GM12878 (cell line): ENCODE measurements at regions of chr17 and their contacts with region 1.

Region 1: DNA sequence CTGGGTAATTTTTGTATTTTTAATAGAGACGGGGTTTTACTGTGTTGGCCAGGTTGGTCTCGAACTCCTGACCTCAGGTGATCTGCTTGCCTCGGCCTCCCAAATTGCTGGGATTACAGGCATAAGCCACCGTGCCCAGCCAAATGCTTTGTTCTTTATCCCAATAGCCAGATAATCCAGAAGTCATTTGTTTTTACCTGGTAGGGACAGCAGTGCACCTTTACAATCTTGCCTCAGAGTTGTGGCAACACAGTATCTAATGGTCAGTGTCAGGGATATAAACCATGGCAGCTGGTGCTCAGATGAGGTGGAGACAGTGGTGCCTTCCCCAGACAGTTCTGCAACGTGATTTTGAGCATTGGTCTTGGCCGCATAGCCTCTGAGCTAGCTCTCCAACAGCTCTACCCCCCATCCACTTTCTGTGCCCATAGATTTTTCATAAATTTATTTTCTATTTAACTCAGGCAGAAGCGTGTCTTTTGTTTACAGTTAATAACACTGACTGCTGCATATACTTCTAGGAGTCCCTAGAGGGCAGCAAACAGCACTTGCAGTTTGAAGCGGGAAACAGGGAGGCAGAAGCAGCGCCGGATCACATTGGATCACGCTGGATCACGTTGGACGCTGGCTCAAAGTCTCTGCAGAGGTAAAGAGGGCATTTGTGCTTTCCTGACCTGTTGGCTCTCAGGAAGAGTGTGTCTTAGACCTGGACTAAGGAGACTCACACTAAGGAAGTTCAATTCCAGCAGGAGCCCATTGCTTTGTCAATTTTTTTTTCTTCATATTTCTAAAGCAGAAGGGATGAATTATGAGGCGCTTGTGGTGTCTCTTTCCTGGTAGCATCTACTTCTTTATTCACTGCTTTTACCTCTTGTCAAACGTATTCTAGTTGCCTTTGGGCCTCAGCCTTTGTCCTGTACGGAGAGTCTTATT is 5.1 kb upstream of the GGT6 start:
- DNase-seq: no peak
- ATAC-seq: peak; percentile 78
- H3K4me3 ChIP-seq: no peak overlapping the region
- H3K27ac ChIP-seq: no peak overlapping the region
- H3K4me1 ChIP-seq: peaks cover 32% of the 10 kb centered on the region
- H3K27me3 ChIP-seq: no peaks in the 10 kb centered on the region
- CTCF ChIP-seq: peak; percentile 80 to 92 (median 86)
- EP300 ChIP-seq: no peak
- POLR2A ChIP-seq: no peak
- RAD21 ChIP-seq: peak; percentile 53

Region 2: DNA sequence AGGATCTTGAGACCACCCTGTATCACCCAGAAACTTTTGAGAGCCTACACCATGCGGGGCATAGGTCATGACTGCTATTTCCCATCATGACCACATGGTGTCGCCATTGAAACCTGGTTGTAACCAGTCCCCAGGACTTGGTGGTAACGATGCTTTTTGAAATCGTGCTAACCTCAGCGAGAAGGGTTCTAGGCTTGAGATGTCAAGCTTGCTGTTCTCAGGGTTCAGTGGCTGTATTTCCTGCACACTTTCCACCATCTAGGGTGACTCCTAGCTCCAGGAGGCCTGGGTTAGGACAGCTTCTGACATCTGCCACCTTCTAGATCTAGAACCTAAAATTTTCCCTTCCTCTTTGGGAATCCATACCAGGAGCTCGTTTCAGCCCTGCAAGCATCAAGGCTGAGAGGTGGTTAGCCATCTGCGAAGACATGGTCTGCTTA is 144.8 kb before region 1 on chr17:
- CTCF ChIA-PET with region 1: interaction called, 33 read pairs
- POLR2A ChIA-PET with region 1: no interaction called
- RAD21 ChIA-PET with region 1: interaction called, 9 read pairs
- SMC1A ChIA-PET with region 1: interaction called, 9 read pairs
- in situ Hi-C with region 1: no loop called
- intact Hi-C with region 1: loop called (anchors 10 kb)
- DNase-seq: peak; percentile 37
- ATAC-seq: peak; percentile 98
- H3K4me3 ChIP-seq: no peak overlapping the region
- H3K27ac ChIP-seq: no peak overlapping the region
- H3K4me1 ChIP-seq: no peaks in the 10 kb centered on the region
- H3K27me3 ChIP-seq: no peaks in the 10 kb centered on the region
- CTCF ChIP-seq: peak; percentile 89 to 93 (median 91)
- EP300 ChIP-seq: no peak
- POLR2A ChIP-seq: no peak
- RAD21 ChIP-seq: peak; percentile 91

Region 3: DNA sequence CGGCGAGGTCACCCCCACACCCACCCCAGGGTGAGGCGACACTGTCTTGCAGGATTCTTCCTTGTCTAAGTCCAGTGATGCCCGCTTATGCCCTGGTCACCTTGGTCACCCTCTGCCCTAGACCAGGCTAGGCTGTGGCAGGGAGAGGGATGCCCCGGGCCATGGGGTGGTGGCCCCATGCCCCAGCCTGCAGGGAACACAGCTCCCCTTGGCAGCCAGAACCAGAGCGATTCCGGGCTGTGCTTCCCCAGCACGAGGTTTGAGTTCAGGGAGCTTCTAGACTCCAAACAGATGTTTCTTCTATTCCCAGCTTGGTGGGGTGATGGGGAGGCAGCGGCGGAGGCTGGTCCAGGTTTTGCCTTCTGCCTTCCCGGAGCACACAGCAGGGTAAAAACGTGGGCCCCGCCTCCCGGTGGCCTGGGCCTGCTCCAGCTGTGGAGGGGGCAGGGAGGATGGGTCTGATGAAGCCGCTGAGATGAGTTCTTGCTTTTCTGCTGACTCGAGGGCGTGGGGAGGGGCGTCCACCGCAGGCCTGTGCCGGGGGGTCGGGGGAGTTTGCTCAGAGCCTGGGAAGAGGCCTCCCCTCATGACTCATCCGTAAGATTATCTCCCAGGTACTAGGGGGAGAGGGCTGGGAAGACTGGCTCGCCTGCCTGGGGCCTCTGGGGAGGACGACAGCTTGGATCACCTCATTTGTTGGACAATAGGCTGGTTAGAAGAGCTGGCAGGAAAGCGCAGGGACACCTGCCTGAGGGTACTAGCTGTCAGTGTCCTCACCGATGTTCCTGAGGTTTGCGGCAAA is 34.2 kb after region 1 on chr17:
- CTCF ChIA-PET with region 1: interaction called, 10 read pairs
- POLR2A ChIA-PET with region 1: no interaction called
- RAD21 ChIA-PET with region 1: no interaction called
- SMC1A ChIA-PET with region 1: interaction called, 3 read pairs
- in situ Hi-C with region 1: no loop called
- intact Hi-C with region 1: no loop called
- DNase-seq: no peak
- ATAC-seq: no peak
- H3K4me3 ChIP-seq: no peak overlapping the region
- H3K27ac ChIP-seq: no peak overlapping the region
- H3K4me1 ChIP-seq: no peaks in the 10 kb centered on the region
- H3K27me3 ChIP-seq: no peaks in the 10 kb centered on the region; a peak in 3 of 4 replicates
- CTCF ChIP-seq: no peak
- EP300 ChIP-seq: no peak
- POLR2A ChIP-seq: no peak
- RAD21 ChIP-seq: no peak

Region 4: GRCh38 chr17:4625181-4625617 is 59.7 kb after region 1 on chr17:
- CTCF ChIA-PET with region 1: interaction called, 135 read pairs
- POLR2A ChIA-PET with region 1: no interaction called
- RAD21 ChIA-PET with region 1: interaction called, 24 read pairs
- SMC1A ChIA-PET with region 1: interaction called, 31 read pairs
- in situ Hi-C with region 1: loop called (anchors 5 kb)
- intact Hi-C with region 1: loop called (anchors 1 kb)
- DNase-seq: no peak
- ATAC-seq: no peak
- H3K4me3 ChIP-seq: no peak overlapping the region
- H3K27ac ChIP-seq: no peak overlapping the region
- H3K4me1 ChIP-seq: no peaks in the 10 kb centered on the region
- H3K27me3 ChIP-seq: peaks cover 0 to 3% of the 10 kb centered on the region in 2 experiments; a peak in 2 of 4 replicates
- CTCF ChIP-seq: no peak
- EP300 ChIP-seq: no peak
- POLR2A ChIP-seq: no peak
- RAD21 ChIP-seq: no peak

Region 5: DNA sequence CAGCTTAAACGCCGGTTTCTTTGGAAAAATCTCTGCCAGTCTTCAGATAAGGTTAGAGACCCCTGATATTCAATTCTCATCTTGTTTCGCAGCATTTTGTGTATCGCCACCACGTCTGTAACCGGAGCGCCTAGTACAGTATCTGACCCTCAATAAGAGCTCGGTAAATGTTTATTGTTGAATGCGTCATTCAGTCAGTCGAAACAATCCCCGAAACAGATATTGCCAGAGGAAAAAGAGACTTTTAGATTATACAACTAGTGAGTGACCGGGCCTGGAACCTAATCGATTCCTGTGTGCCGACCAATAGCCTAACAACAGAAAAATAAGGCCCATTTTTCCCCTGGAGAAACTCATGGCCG is 137.8 kb after region 1 on chr17:
- CTCF ChIA-PET with region 1: interaction called, 13 read pairs
- POLR2A ChIA-PET with region 1: no interaction called
- RAD21 ChIA-PET with region 1: interaction called, 3 read pairs
- SMC1A ChIA-PET with region 1: interaction called, 8 read pairs
- in situ Hi-C with region 1: no loop called
- intact Hi-C with region 1: no loop called
- DNase-seq: no peak
- ATAC-seq: no peak
- H3K4me3 ChIP-seq: peak overlapping the region; percentile 82
- H3K27ac ChIP-seq: peak overlapping the region; percentile 71
- H3K4me1 ChIP-seq: peaks cover 5% of the 10 kb centered on the region
- H3K27me3 ChIP-seq: no peaks in the 10 kb centered on the region
- CTCF ChIP-seq: no peak
- EP300 ChIP-seq: no peak
- POLR2A ChIP-seq: no peak
- RAD21 ChIP-seq: no peak

Region 6: GRCh38 chr17:4903051-4903818 is 337.8 kb after region 1 on chr17 and contains the start of gene CHRNE:
- CTCF ChIA-PET with region 1: interaction called, 11 read pairs
- POLR2A ChIA-PET with region 1: no interaction called
- RAD21 ChIA-PET with region 1: no interaction called
- SMC1A ChIA-PET with region 1: interaction called, 3 read pairs
- in situ Hi-C with region 1: no loop called
- intact Hi-C with region 1: no loop called
- DNase-seq: peak; percentile 37
- ATAC-seq: peak; percentile 80
- H3K4me3 ChIP-seq: no peak within 1 kb of the TSS
- H3K27ac ChIP-seq: no peak within 1 kb of the TSS
- H3K4me1 ChIP-seq: peaks cover 20% of the 10 kb centered on the region
- H3K27me3 ChIP-seq: no peaks in the 10 kb centered on the region; a peak in 2 of 4 replicates
- CTCF ChIP-seq: peak; percentile 73 to 81 (median 77)
- EP300 ChIP-seq: no peak
- POLR2A ChIP-seq: no peak
- RAD21 ChIP-seq: peak; percentile 51
- polyA plus RNA-seq, gene CHRNE: 0.05 TPM in 1 of 2 experiments, not detected in the other